Mammary epithelial cell (primary cell): ENCODE measurements at regions of chr4 and their contacts with region 1.

Region 1: DNA sequence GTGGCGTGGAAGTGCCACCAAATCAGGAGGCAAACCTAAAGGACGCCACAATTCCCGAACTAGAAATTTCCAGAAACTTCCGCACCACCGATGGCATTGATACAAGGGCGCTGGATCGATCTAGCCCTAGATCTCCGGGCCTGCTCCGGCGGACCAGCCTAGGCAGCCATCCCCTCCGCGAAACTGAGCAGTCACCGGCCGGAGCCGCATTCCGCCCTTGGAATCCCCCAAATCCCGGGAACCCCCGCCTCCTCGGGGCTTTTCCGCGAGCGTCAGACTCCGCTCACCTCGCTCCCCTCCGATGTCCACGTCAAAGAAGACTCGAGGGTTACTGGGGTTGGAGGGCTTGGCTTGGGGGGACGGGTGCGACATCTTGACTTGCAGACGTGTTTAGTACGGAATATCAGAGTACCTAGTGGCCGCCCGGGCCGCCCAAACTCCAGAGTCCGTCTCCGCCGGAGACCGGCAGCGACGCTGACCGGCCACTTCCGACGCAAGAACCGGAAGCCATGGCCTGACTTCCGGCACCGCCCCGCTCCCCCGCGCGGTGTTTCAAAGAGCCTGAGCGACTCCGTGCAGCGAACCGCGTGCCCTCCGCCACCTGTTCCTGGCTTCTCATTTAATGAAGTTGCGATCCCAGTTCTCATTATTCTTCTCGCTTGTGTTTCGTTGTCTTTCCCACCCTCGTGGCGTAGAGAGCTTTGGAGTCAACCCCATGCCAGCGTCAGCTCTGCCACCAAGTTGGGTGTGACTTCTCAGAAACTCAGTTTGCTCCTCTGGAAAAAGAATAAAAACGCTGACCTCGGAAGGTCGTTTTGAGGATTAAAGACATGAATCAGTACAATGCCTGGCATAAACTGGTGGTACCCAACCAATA is at the start of gene PPID:
- DNase-seq: peak; percentile 82
- H3K4me3 ChIP-seq: peak within 1 kb of the TSS; percentile 61 to 80 (median 67)
- H3K27ac ChIP-seq: peak within 1 kb of the TSS; percentile 91
- H3K4me1 ChIP-seq: peaks cover 7% of the 10 kb centered on the region
- H3K27me3 ChIP-seq: no peaks in the 10 kb centered on the region
- CTCF ChIP-seq: no peak
- total RNA-seq, gene PPID: 13.8 to 26.0 TPM

Region 2: GRCh38 chr4:158253350-158253980 is 469.7 kb before region 1 on chr4:
- CTCF ChIA-PET with region 1: no interaction called
- dilution Hi-C with region 1: no loop called
- in situ Hi-C with region 1: no loop called
- intact Hi-C with region 1: loop called (anchors 5 kb)
- DNase-seq: peak; percentile 43
- H3K4me3 ChIP-seq: no peak overlapping the region
- H3K27ac ChIP-seq: no peak overlapping the region
- H3K4me1 ChIP-seq: no peaks in the 10 kb centered on the region
- H3K27me3 ChIP-seq: no peaks in the 10 kb centered on the region
- CTCF ChIP-seq: peak; percentile 52 to 66

Region 3: DNA sequence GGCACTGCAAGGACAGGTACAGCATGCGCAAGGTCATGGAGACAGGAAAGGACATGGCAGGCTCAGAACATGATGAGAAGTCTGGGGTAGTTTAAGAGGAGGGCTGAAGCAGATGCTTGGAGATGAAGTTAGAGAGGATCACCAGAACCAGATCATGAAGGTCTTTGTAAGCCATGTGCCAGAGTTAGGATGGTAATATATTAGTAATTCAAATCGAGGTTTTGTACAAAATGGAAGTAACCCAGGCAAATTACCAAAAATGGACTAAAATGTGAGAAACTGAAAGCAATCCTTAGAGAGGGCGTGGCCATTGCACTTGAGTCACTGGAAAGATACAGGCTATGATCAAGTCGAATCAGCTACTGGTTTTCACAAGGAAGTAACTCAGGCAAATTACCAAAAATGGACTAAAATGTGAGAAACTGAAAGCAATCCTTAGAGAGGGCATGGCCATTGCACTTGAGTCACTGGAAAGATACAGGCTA is 188.0 kb before region 1 on chr4:
- CTCF ChIA-PET with region 1: no interaction called
- dilution Hi-C with region 1: no loop called
- in situ Hi-C with region 1: no loop called
- intact Hi-C with region 1: no loop called
- DNase-seq: peak; percentile 70
- H3K4me3 ChIP-seq: no peak overlapping the region
- H3K27ac ChIP-seq: no peak overlapping the region
- H3K4me1 ChIP-seq: peaks cover 30% of the 10 kb centered on the region
- H3K27me3 ChIP-seq: no peaks in the 10 kb centered on the region
- CTCF ChIP-seq: no peak

Region 4: GRCh38 chr4:158649111-158649680 is 74.0 kb before region 1 on chr4:
- CTCF ChIA-PET with region 1: no interaction called
- dilution Hi-C with region 1: no loop called
- in situ Hi-C with region 1: no loop called
- intact Hi-C with region 1: no loop called
- DNase-seq: no peak
- H3K4me3 ChIP-seq: no peak overlapping the region
- H3K27ac ChIP-seq: no peak overlapping the region
- H3K4me1 ChIP-seq: peaks cover 4% of the 10 kb centered on the region
- H3K27me3 ChIP-seq: no peaks in the 10 kb centered on the region
- CTCF ChIP-seq: no peak

Region 5: DNA sequence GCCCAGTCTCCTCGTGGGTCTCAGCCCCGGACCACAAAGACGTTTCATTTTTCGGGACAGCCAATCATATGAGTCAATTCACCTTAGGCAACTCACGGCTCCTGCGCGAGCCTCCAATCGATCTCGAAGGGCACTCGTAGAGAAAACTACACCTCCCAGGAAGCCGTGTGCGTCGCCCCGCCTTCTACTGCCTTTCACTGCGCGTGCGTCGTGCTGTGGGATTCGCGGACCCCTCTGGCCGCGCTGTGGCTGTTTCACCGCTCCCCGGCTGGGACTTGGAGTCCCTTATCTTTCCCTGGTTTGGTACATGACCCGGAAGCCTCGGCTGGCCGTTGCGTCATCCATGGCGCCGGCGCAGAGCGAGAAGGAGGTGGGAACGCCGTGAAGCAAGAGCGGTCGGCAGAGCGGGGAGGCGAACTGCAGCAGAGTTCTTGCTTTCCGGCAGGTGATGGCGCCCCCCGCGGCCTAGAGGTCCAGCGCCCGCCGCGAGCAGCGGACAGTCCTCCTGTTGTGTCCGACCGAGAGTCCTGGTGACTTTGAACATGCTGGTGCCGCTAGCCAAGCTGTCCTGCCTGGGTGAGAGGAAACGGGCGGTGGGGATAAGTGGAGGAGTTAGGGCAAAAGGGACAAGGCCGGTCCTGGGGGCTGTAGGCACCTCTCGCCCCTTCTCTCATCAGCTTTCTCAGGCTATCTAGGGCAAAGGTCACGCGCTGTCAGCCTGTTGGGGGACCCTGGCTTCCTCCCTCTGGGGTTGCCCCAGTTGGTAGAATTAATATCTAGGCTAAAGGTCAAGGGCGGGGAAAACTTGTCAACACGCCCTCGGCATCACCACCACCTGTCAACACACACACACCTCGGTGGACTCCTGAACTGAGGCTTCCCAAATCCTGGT is 51.0 kb before region 1 on chr4 and contains the start of gene ETFDH:
- CTCF ChIA-PET with region 1: no interaction called
- dilution Hi-C with region 1: no loop called
- in situ Hi-C with region 1: no loop called
- intact Hi-C with region 1: loop called (anchors 1 kb)
- DNase-seq: peak; percentile 100
- H3K4me3 ChIP-seq: peak within 1 kb of the TSS; percentile 70 to 90 (median 76)
- H3K27ac ChIP-seq: peak within 1 kb of the TSS; percentile 82
- H3K4me1 ChIP-seq: peaks cover 14% of the 10 kb centered on the region
- H3K27me3 ChIP-seq: no peaks in the 10 kb centered on the region
- CTCF ChIP-seq: peak; percentile 43 to 66
- total RNA-seq, gene ETFDH: 18.1 to 22.8 TPM

Region 6: GRCh38 chr4:158710814-158711213 is 12.3 kb before region 1 on chr4:
- CTCF ChIA-PET with region 1: no interaction called
- dilution Hi-C with region 1: no loop called
- in situ Hi-C with region 1: no loop called
- intact Hi-C with region 1: no loop called
- DNase-seq: no peak
- H3K4me3 ChIP-seq: no peak overlapping the region
- H3K27ac ChIP-seq: no peak overlapping the region
- H3K4me1 ChIP-seq: no peaks in the 10 kb centered on the region
- H3K27me3 ChIP-seq: no peaks in the 10 kb centered on the region
- CTCF ChIP-seq: peak in 1 of 2 donors; percentile 15

Region 7: DNA sequence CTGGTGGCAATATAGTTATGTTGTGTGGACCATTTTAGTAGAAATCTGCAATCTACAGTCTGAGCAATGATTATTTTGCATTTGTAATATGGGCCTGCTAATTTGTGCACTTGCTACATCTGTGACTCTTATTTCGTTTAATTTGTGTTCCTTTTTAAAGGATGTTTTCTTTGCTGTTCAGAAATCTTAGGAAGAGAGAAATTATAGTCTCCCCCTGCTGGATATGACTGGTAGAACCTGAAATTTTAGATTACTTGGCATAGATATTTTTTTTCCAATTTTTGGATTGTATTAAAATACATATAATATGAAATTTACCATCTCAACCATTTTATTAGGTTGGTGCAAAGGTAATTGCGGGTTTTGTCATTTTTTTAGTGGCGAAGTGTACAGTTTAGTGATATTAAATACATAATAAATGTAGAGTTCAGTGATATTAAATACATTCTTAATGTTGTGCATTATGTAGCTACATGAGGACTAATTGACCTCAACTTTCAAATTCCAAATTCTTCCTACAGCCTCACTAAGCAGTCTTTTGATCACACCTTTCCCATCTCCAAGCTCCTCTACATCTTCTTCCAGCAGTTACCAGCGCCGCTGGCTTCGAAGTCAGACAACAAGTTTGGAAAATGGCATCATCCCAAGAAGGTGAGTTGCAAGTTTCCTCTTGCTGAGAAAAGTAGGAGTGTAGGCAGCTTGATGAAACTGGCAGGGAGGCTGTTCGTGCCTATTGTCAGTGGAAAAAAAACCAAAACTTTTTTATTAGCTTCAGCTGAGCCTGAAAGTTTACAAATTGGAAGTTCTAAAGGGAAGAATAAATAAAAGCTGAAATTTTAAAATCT is 127.9 kb after region 1 on chr4:
- CTCF ChIA-PET with region 1: no interaction called
- dilution Hi-C with region 1: no loop called
- in situ Hi-C with region 1: loop called (anchors 5 to 10 kb)
- intact Hi-C with region 1: loop called (anchors 2 kb)
- DNase-seq: no peak
- H3K4me3 ChIP-seq: no peak overlapping the region
- H3K27ac ChIP-seq: no peak overlapping the region
- H3K4me1 ChIP-seq: no peaks in the 10 kb centered on the region
- H3K27me3 ChIP-seq: no peaks in the 10 kb centered on the region
- CTCF ChIP-seq: peak; percentile 55 to 56

Region 8: GRCh38 chr4:158856852-158857251 is 133.7 kb after region 1 on chr4:
- CTCF ChIA-PET with region 1: no interaction called
- dilution Hi-C with region 1: no loop called
- in situ Hi-C with region 1: loop called in 1 of 2 experiments (anchors 10 kb)
- intact Hi-C with region 1: no loop called
- DNase-seq: peak; percentile 25
- H3K4me3 ChIP-seq: no peak overlapping the region
- H3K27ac ChIP-seq: no peak overlapping the region
- H3K4me1 ChIP-seq: no peaks in the 10 kb centered on the region
- H3K27me3 ChIP-seq: no peaks in the 10 kb centered on the region
- CTCF ChIP-seq: peak; percentile 44 to 63

Region 9: GRCh38 chr4:159206427-159206871 is 483.3 kb after region 1 on chr4:
- CTCF ChIA-PET with region 1: no interaction called
- dilution Hi-C with region 1: no loop called
- in situ Hi-C with region 1: loop called (anchors 10 kb)
- intact Hi-C with region 1: no loop called
- DNase-seq: peak; percentile 60
- H3K4me3 ChIP-seq: peak overlapping the region in 1 of 3 experiments; percentile 20
- H3K27ac ChIP-seq: peak overlapping the region; percentile 20
- H3K4me1 ChIP-seq: peaks cover 7% of the 10 kb centered on the region
- H3K27me3 ChIP-seq: no peaks in the 10 kb centered on the region
- CTCF ChIP-seq: no peak